PC-9 (cell line): ENCODE measurements at regions of chr3 and their contacts with region 1.

Region 1: GRCh38 chr3:99833617-99834205 is 16.0 kb downstream of the CMSS1 start:
- DNase-seq: no peak
- H3K4me3 ChIP-seq: no peak overlapping the region
- H3K27ac ChIP-seq: no peak overlapping the region
- H3K4me1 ChIP-seq: no peaks in the 10 kb centered on the region
- H3K27me3 ChIP-seq: no peaks in the 10 kb centered on the region
- CTCF ChIP-seq: no peak

Region 2: DNA sequence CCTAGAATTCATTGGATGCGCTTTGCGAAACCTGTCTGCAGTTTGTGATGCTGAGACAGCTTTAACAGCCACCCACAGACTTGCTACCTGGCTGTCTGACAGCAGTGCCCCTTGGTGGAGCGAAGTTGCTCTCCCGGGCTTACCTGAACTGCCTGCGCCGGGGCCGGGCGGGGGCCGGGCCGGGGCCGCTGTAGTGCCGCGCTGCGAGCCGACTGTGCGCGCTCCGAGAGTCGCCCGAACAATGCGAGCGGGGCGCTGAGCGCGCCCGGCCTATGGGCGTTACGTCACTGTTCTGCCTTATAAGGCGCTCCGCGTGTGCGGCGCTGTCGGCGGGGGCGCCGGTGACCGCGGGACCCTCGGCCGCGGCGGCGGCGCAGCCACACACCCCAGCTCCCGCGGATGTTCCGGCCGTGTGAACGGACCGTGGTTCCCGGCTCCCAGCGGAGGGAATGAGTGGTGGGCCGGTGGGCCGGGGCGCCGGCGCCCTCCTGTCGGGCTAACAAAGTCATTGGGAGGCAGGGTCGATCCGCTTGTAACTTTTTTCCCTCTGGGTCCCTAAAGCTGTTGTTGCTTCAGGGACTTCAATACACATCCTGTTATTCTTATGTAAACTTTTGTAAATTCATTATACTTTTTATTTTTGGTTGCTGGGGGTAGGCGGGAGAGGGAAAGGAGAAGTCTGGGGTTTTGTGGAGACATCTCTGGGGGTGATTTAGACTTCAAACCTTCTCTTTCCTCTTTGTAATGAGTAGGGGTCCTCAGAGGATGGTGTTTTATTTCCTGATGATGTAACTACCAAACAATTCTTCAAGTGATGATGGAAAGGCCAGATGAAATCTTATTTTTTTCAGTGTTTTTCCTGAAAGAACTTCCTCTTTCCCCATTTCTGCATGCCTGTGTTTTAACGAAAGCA is 42.5 kb after region 1 on chr3:
- CTCF ChIA-PET with region 1: no interaction called
- POLR2A ChIA-PET with region 1: interaction called, 23 read pairs
- intact Hi-C with region 1: no loop called
- DNase-seq: peak; percentile 76 to 86
- H3K4me3 ChIP-seq: peak overlapping the region; percentile 65
- H3K27ac ChIP-seq: peak overlapping the region; percentile 60
- H3K4me1 ChIP-seq: peaks cover 65% of the 10 kb centered on the region
- H3K27me3 ChIP-seq: no peaks in the 10 kb centered on the region
- CTCF ChIP-seq: no peak

Region 3: DNA sequence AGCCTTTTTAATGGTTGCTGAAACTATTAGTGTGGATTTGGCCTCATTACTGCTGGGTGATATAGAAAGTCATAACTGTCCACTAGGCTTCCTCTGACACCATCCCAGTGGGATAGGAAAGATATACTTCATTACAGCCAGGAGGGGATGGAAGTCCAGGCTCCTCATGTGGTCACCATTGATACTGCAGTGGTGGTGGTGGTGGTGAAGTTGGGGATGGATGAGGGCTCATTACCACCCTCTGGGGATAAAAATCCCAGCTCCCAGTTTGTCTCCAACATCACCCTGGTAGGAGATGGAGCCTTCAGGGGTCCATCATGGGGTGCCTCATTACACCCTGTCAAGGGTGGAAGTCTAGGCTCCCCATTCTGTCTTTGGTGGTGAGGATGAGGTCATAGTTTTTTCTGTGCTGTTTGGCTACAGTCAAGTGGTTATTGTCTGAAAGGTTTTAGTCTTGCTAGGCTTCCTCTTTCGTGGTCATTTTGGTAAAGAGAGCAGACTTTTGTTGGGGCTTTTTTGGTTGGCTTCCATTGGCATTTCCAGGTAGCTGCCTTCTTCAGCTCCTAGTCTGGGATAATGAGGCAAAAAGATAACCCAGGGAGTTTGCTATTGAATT is 310.6 kb after region 1 on chr3:
- CTCF ChIA-PET with region 1: no interaction called
- POLR2A ChIA-PET with region 1: no interaction called
- intact Hi-C with region 1: no loop called
- DNase-seq: no peak
- H3K4me3 ChIP-seq: no peak overlapping the region
- H3K27ac ChIP-seq: no peak overlapping the region
- H3K4me1 ChIP-seq: no peaks in the 10 kb centered on the region
- H3K27me3 ChIP-seq: no peaks in the 10 kb centered on the region
- CTCF ChIP-seq: no peak

Region 4: GRCh38 chr3:100205171-100205570 is 371.5 kb after region 1 on chr3:
- CTCF ChIA-PET with region 1: interaction called, 13 read pairs
- POLR2A ChIA-PET with region 1: no interaction called
- intact Hi-C with region 1: no loop called
- DNase-seq: no peak
- H3K4me3 ChIP-seq: no peak overlapping the region
- H3K27ac ChIP-seq: no peak overlapping the region
- H3K4me1 ChIP-seq: no peaks in the 10 kb centered on the region
- H3K27me3 ChIP-seq: no peaks in the 10 kb centered on the region
- CTCF ChIP-seq: no peak

Region 5: GRCh38 chr3:100316641-100317069 is 482.9 kb after region 1 on chr3:
- CTCF ChIA-PET with region 1: interaction called, 9 read pairs
- POLR2A ChIA-PET with region 1: no interaction called
- intact Hi-C with region 1: loop called (anchors 5 kb)
- DNase-seq: peak; percentile 33 to 59
- H3K4me3 ChIP-seq: no peak overlapping the region
- H3K27ac ChIP-seq: no peak overlapping the region
- H3K4me1 ChIP-seq: no peaks in the 10 kb centered on the region
- H3K27me3 ChIP-seq: no peaks in the 10 kb centered on the region
- CTCF ChIP-seq: peak; percentile 93

Region 6: DNA sequence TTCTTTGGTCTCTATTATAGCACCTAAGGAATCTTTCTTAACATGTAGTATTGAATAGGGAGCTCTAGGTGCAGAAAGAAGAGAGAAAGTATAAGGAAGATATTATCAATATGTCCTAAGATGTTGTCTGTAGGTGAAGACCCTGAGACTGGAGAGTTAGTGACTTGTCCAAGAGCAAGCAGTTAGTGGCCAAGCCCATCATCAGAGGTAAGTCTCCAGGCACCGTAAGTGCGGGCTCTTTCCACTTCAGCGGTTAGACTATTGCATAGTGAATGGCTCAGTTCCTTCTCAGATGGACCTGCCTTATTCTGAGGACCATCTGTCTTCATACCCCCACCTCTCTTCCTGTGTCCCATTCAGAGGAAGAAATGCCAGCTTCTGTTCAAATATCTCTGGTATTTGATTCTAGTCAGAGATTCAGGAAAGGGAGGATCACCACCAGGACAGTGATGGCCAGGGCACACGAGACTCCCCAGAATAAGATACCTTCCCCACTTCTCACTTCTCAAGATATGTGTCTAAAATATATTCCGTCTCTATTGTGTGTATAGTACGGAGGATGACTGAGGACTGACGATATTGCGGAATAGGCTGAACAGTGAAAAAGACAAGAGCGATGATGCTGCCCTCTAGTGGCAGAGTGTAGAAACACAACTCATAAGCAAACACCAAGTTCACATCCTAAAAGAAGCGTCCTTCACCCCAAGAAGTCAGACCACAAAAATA is 756.6 kb after region 1 on chr3:
- CTCF ChIA-PET with region 1: interaction called, 4 read pairs
- POLR2A ChIA-PET with region 1: no interaction called
- intact Hi-C with region 1: loop called (anchors 5 kb)
- DNase-seq: peak; percentile 62 to 64
- H3K4me3 ChIP-seq: peak overlapping the region; percentile 21; the same call in 1 of the 2 replicates
- H3K27ac ChIP-seq: no peak overlapping the region
- H3K4me1 ChIP-seq: 0 out of 2 replicates have a peak, but pooled peaks cover 4% of the 10 kb centered on the region
- H3K27me3 ChIP-seq: no peaks in the 10 kb centered on the region
- CTCF ChIP-seq: peak; percentile 100

Region 7: DNA sequence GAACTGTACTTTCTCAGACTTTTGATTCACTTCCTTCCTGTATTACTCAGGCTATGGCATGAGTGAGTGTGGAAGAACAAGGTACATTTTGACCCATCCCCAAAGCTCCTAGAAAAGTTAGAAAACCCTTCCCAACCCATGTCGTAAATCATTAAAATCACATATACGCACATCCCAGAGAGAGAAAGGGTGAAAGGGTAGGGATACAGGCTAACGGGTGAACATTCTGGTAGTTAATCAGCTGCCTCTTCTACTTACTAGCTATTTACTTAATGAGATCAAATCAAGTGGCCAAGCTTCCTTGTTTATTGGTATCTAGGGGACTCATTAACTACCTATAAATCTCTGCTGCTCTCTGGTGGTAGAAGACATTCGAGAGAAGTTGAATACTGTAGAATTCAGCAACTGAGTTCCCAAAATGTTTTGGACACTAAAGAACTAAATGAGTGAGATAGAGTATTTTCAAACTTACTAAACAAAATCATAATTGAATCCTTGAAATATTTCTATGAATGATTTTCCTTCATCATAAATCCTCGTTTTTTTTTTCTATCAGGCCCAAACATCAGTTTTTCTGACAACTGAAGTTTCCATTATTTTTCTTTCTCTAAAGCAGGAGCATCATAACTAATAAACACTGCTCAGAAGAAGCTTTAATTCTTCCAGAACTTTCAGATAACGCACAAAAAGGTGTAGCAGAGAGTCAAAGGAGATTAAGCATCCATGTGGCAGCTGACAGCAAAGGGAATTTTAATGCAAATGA is 1362.4 kb after region 1 on chr3:
- CTCF ChIA-PET with region 1: no interaction called
- POLR2A ChIA-PET with region 1: no interaction called
- intact Hi-C with region 1: loop called (anchors 2 kb)
- DNase-seq: peak; percentile 18 to 82
- H3K4me3 ChIP-seq: no peak overlapping the region
- H3K27ac ChIP-seq: no peak overlapping the region
- H3K4me1 ChIP-seq: peaks cover 19% of the 10 kb centered on the region
- H3K27me3 ChIP-seq: no peaks in the 10 kb centered on the region
- CTCF ChIP-seq: peak; percentile 96